Activated CD4-positive, alpha-beta T cell treated with anti-CD3 and anti-CD28 coated beads for 36 hours (primary cell): ENCODE measurements at regions of chr19 and their contacts with region 1.

Region 1: GRCh38 chr19:10653715-10654492 is at the start of gene ILF3:
- DNase-seq: peak; percentile 100
- ATAC-seq: peak; percentile 82
- H3K4me3 Mint-ChIP-seq: peak within 1 kb of the TSS; percentile 86
- H3K27ac Mint-ChIP-seq: peak within 1 kb of the TSS; percentile 97
- H3K4me1 Mint-ChIP-seq: peaks cover 34% of the 10 kb centered on the region
- H3K27me3 Mint-ChIP-seq: no peaks in the 10 kb centered on the region
- total RNA-seq, gene ILF3: 433 to 570 TPM

Region 2: DNA sequence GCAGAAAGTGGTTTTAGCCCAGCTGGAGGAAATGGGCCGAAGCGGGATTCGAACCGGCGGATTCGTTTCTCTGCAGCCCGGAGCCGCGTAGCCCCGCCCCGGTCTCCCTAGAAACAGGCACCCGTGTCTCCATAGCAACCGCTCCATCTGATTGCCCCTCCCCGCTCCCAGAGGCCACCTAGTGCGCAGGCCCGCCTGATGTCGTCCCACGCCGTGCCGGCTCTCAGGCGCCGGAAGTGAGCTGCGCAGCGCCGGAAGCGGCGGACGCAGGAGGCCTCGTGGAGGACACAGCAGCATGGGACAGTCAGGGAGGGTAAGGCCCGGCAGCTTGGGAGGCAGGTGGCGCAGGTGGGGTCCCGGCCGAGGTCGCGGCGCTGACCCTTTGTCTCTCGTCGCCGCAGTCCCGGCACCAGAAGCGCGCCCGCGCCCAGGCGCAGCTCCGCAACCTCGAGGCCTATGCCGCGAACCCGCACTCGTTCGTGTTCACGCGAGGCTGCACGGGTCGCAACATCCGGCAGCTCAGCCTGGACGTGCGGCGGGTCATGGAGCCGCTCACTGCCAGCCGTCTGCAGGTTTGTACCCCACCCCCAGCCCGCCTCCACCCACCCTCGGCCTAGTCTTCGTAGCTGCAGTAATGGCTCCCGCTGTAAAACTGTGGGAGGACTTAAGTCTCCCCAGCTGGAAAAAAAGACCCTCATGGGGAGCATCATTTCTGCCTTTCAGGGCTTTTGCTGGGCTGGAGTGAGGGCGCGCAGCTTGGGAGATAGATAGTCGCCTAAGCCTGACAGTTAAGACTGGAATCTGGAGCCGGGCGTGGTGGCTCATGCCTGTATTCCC is 547.6 kb before region 1 on chr19 and contains the start of gene PPAN:
- CTCF ChIA-PET with region 1: no interaction called
- POLR2A ChIA-PET with region 1: no interaction called
- intact Hi-C with region 1: loop called in 1 of 2 experiments (anchors 2 kb)
- DNase-seq: peak; percentile 99
- ATAC-seq: peak; percentile 58
- H3K4me3 Mint-ChIP-seq: peak within 1 kb of the TSS; percentile 90
- H3K27ac Mint-ChIP-seq: peak within 1 kb of the TSS; percentile 99
- H3K4me1 Mint-ChIP-seq: peaks cover 67% of the 10 kb centered on the region
- H3K27me3 Mint-ChIP-seq: no peaks in the 10 kb centered on the region
- total RNA-seq, gene PPAN: 139 to 149 TPM

Region 3: DNA sequence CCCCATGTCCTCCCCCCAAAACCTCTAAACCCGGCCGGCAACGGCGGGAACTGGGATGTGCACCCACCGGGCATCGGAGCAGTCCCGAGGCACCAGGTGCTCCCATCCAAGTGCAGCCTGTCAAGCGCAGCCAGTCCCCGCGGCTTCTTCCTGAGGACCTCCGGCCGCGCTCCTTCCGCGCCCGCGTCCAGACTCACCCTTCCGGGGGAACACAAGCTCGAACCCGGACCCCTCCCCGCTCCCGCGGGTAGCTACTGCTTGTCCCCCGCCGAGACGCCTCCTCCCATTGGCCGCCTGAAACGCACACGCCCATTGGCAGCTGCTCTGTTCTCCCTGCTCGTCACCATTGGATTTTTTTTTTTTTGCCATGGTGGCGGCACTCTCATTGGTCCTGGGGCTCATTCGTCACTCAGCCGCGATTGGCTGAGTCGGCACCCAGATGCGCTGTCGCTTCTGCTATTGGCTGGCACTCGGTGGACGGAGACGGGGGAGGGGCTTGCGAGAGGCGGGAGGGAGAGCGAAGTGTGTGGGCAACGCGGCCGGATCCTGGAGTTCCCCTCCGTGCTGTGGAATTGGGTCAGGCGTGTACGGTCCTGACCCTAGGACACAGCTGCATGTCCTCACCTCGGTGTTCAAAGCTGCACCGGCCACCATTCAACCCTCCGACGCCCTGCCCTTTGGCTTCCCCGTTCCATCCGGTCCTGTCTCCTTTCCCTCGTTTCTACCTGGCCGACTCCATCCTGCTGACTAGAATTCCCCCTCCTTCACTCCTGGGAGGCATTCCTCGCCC is 273.4 kb before region 1 on chr19 and contains the start of gene TYK2:
- CTCF ChIA-PET with region 1: no interaction called
- POLR2A ChIA-PET with region 1: no interaction called
- intact Hi-C with region 1: loop called in 1 of 2 experiments (anchors 1 kb)
- DNase-seq: peak; percentile 97
- ATAC-seq: peak; percentile 99
- H3K4me3 Mint-ChIP-seq: peak within 1 kb of the TSS; percentile 86
- H3K27ac Mint-ChIP-seq: peak within 1 kb of the TSS; percentile 96
- H3K4me1 Mint-ChIP-seq: peaks cover 22% of the 10 kb centered on the region
- H3K27me3 Mint-ChIP-seq: no peaks in the 10 kb centered on the region
- total RNA-seq, gene TYK2: 151 to 197 TPM

Region 4: DNA sequence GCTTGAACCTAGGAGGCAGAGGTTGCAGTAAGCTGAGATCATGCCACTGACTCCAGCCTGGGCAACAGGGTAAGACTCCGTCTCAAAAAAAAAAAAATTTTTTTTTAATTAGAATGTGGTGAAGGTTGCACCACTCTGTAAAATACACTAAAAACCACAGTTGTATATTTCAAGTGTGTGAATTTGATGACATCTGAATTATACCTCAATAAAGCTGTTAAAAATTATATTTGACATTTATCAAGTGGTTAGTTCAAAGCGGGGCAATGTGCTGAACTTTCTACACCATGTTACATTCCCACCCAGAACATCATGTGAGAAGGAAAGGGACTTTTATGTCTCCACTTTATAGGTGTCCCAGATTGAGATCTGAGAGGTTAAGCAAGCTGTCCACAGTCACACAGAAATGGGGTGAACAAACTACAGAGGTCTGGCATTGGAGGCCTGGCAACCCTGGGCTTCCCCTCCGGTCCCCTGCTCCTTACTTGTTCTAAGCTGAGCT is 130.7 kb before region 1 on chr19:
- CTCF ChIA-PET with region 1: no interaction called
- POLR2A ChIA-PET with region 1: no interaction called
- intact Hi-C with region 1: no loop called
- DNase-seq: no peak
- ATAC-seq: no peak
- H3K4me3 Mint-ChIP-seq: no peak overlapping the region
- H3K27ac Mint-ChIP-seq: no peak overlapping the region
- H3K4me1 Mint-ChIP-seq: peaks cover 13% of the 10 kb centered on the region
- H3K27me3 Mint-ChIP-seq: peaks cover 16% of the 10 kb centered on the region

Region 5: GRCh38 chr19:10580979-10581631 is 72.8 kb before region 1 on chr19:
- CTCF ChIA-PET with region 1: interaction called, 239 read pairs
- POLR2A ChIA-PET with region 1: interaction called, 5 read pairs
- intact Hi-C with region 1: loop called in 1 of 2 experiments (anchors 2 kb)
- DNase-seq: peak; percentile 95
- ATAC-seq: peak; percentile 98
- H3K4me3 Mint-ChIP-seq: no peak overlapping the region
- H3K27ac Mint-ChIP-seq: no peak overlapping the region
- H3K4me1 Mint-ChIP-seq: peaks cover 17% of the 10 kb centered on the region
- H3K27me3 Mint-ChIP-seq: no peaks in the 10 kb centered on the region

Region 6: GRCh38 chr19:10593820-10594637 is 59.9 kb before region 1 on chr19:
- CTCF ChIA-PET with region 1: no interaction called
- POLR2A ChIA-PET with region 1: no interaction called
- intact Hi-C with region 1: no loop called
- DNase-seq: no peak
- ATAC-seq: no peak
- H3K4me3 Mint-ChIP-seq: no peak overlapping the region
- H3K27ac Mint-ChIP-seq: no peak overlapping the region
- H3K4me1 Mint-ChIP-seq: peaks cover 24% of the 10 kb centered on the region
- H3K27me3 Mint-ChIP-seq: no peaks in the 10 kb centered on the region

Region 7: GRCh38 chr19:10717356-10718204 is 63.7 kb after region 1 on chr19 and contains the start of gene DNM2:
- CTCF ChIA-PET with region 1: no interaction called
- POLR2A ChIA-PET with region 1: no interaction called
- intact Hi-C with region 1: loop called in 1 of 2 experiments (anchors 1 kb)
- DNase-seq: peak; percentile 98
- ATAC-seq: peak; percentile 92
- H3K4me3 Mint-ChIP-seq: peak within 1 kb of the TSS; percentile 97
- H3K27ac Mint-ChIP-seq: peak within 1 kb of the TSS; percentile 89
- H3K4me1 Mint-ChIP-seq: peaks cover 45% of the 10 kb centered on the region
- H3K27me3 Mint-ChIP-seq: no peaks in the 10 kb centered on the region
- total RNA-seq, gene DNM2: 167 to 185 TPM

Region 8: GRCh38 chr19:10812902-10813404 is 159.0 kb after region 1 on chr19:
- CTCF ChIA-PET with region 1: no interaction called
- POLR2A ChIA-PET with region 1: no interaction called
- intact Hi-C with region 1: no loop called
- DNase-seq: peak; percentile 71
- ATAC-seq: peak; percentile 82
- H3K4me3 Mint-ChIP-seq: no peak overlapping the region
- H3K27ac Mint-ChIP-seq: peak overlapping the region; percentile 80
- H3K4me1 Mint-ChIP-seq: peaks cover 29% of the 10 kb centered on the region
- H3K27me3 Mint-ChIP-seq: no peaks in the 10 kb centered on the region

Region 9: GRCh38 chr19:10928525-10929401 is 274.9 kb after region 1 on chr19 and contains the starts of genes TIMM29 and YIPF2:
- CTCF ChIA-PET with region 1: no interaction called
- POLR2A ChIA-PET with region 1: no interaction called
- intact Hi-C with region 1: loop called in 1 of 2 experiments (anchors 2 kb)
- DNase-seq: peak; percentile 97
- ATAC-seq: peak; percentile 96
- H3K4me3 Mint-ChIP-seq: peak within 1 kb of the TSS; percentile 90
- H3K27ac Mint-ChIP-seq: peak within 1 kb of the TSS; percentile 79
- H3K4me1 Mint-ChIP-seq: peaks cover 21% of the 10 kb centered on the region
- H3K27me3 Mint-ChIP-seq: no peaks in the 10 kb centered on the region
- total RNA-seq, gene TIMM29: 8.6 to 15.5 TPM
- total RNA-seq, gene YIPF2: 15.8 to 21.3 TPM